ENCODE measurements at regions of chr10 and their contacts with region 1.

Region 1: DNA sequence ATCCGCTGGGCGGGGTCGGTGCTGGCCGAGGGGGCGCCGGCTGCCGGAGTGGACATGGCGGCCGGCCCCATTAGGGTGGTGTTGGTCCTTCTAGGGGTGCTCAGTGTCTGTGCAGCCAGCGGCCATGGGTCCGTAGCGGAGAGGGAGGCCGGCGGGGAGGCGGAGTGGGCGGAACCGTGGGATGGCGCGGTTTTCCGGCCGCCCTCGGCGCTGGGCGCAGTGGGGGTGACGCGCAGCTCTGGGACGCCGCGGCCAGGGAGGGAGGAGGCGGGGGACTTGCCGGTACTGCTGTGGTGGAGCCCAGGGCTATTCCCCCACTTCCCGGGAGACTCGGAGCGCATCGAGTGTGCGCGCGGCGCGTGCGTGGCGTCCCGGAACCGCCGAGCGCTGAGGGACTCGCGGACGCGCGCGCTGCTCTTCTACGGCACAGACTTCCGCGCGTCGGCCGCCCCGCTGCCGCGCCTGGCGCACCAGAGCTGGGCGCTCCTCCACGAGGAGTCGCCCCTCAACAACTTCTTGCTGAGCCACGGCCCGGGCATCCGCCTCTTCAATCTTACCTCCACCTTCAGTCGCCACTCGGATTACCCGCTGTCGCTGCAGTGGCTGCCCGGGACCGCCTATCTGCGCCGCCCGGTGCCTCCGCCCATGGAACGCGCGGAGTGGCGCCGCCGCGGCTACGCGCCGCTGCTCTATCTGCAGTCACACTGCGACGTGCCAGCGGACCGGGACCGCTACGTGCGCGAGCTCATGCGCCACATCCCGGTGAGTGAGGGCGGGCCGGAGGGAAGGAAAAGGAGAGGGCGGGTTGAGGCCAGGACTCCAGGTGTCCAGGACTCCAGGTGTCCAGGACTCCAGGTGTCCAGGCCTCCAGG is 9.3 kb upstream of the CHCHD1 start:
- DNase-seq: peak; percentile 86
- H3K4me3 Mint-ChIP-seq: peak overlapping the region; percentile 85
- H3K27ac Mint-ChIP-seq: peak overlapping the region; percentile 93
- H3K4me1 Mint-ChIP-seq: peaks cover 67% of the 10 kb centered on the region
- H3K27me3 Mint-ChIP-seq: no peaks in the 10 kb centered on the region

Region 2: GRCh38 chr10:73730153-73730906 is 42.2 kb before region 1 on chr10:
- CTCF ChIA-PET with region 1: interaction called, 7 read pairs
- POLR2A ChIA-PET with region 1: interaction called, 24 read pairs
- DNase-seq: peak; percentile 94
- H3K4me3 Mint-ChIP-seq: peak overlapping the region; percentile 92
- H3K27ac Mint-ChIP-seq: peak overlapping the region; percentile 96
- H3K4me1 Mint-ChIP-seq: peaks cover 19% of the 10 kb centered on the region
- H3K27me3 Mint-ChIP-seq: no peaks in the 10 kb centered on the region

Region 3: GRCh38 chr10:73759512-73760115 is 12.9 kb before region 1 on chr10:
- CTCF ChIA-PET with region 1: interaction called, 13 read pairs
- POLR2A ChIA-PET with region 1: interaction called, 60 read pairs
- DNase-seq: peak; percentile 44
- H3K4me3 Mint-ChIP-seq: peak overlapping the region; percentile 21
- H3K27ac Mint-ChIP-seq: peak overlapping the region; percentile 70
- H3K4me1 Mint-ChIP-seq: peaks cover 69% of the 10 kb centered on the region
- H3K27me3 Mint-ChIP-seq: no peaks in the 10 kb centered on the region

Region 4: GRCh38 chr10:73810735-73811465 is 38.4 kb after region 1 on chr10:
- CTCF ChIA-PET with region 1: interaction called, 9 read pairs
- POLR2A ChIA-PET with region 1: interaction called, 36 read pairs
- DNase-seq: peak; percentile 66
- H3K4me3 Mint-ChIP-seq: peak overlapping the region; percentile 91
- H3K27ac Mint-ChIP-seq: peak overlapping the region; percentile 95
- H3K4me1 Mint-ChIP-seq: peaks cover 45% of the 10 kb centered on the region
- H3K27me3 Mint-ChIP-seq: no peaks in the 10 kb centered on the region

Measured in activated CD4-positive, alpha-beta memory T cell treated with anti-CD3 and anti-CD28 coated beads, Interleukin-2, amount 10 ng/mL, durations not matched to agents 7 days and 5 days (primary cell).